Vagina (tissue), 2 donors: ENCODE measurements at regions of chr2 and their contacts with region 1.

Region 1: DNA sequence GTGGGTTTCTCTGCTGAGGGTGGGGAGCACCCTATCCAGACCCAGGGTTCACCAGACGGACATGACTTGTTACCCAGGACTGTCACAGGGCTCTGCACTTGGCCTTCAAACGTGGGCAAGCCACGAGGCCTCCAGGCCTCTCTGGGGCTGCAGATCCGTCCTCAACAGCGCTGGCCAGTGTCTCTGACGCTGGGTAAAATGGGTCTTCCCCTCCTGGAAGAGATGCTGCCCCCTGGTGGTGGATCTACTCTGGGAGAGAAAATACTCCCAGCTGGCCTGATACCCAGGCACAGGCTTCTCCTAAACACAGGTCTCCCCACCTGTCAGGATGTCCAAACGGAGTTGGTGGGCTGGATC is 3.7 kb downstream of the GPR17 start:
- DNase-seq: no peak
- H3K4me3 ChIP-seq: no peak overlapping the region
- H3K27ac ChIP-seq: peak overlapping the region; percentile 33
- H3K4me1 ChIP-seq: peaks cover 35% of the 10 kb centered on the region
- H3K27me3 ChIP-seq: no peaks in the 10 kb centered on the region
- CTCF ChIP-seq: peak; percentile 29 to 68 (median 52)
- POLR2A ChIP-seq: no peak

Region 2: GRCh38 chr2:127508631-127509034 is 141.0 kb before region 1 on chr2:
- intact Hi-C with region 1: loop called (anchors 5 kb)
- DNase-seq: no peak
- H3K4me3 ChIP-seq: no peak overlapping the region
- H3K27ac ChIP-seq: peak overlapping the region; percentile 7
- H3K4me1 ChIP-seq: peaks cover 39% of the 10 kb centered on the region
- H3K27me3 ChIP-seq: no peaks in the 10 kb centered on the region
- CTCF ChIP-seq: no peak
- POLR2A ChIP-seq: no peak